Activated B cell treated with CpG ODN at 0.5 μM for 24 hours (primary cell): ENCODE measurements at regions of chr17 and their contacts with region 1.

Region 1: GRCh38 chr17:40399185-40399584 is 18.5 kb downstream of the TOP2A start:
- DNase-seq: no peak
- ATAC-seq: peak; percentile 61
- H3K4me3 Mint-ChIP-seq: no peak overlapping the region
- H3K27ac Mint-ChIP-seq: no peak overlapping the region
- H3K4me1 Mint-ChIP-seq: peaks cover 15% of the 10 kb centered on the region
- H3K27me3 Mint-ChIP-seq: no peaks in the 10 kb centered on the region
- CTCF ChIP-seq: no peak

Region 2: DNA sequence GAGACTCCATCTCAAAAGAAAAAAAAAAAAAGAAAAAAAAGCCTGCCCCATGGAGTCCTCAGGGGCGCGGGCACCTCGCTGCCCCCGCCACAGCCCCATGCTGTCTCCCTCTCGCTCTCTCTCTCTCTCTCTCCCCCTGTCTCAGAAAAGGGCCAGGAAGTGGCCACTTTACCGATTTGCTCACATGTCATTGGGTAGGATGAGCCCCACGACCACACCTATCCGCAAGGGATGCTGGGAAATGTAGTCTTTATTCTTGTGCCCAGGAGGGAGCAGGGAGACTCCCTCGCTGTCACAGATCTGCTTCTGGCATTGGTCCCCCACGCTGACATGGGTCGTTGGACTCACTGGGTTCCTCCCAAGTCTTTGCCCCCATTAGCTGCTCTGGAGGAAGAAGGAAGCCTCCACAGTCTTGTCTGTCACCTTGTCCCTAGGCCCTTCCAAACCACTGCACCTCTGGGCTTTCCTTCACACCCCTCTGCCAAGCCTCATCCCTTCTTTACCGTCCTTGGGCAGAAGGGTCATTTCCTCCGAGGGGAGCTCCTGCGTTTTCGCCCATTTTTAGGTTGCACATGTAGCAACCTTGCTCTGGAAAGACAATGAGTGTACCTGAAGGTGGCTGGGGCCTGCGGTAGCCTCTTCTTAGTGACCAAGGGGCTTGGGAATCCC is 27.8 kb before region 1 on chr17:
- CTCF ChIA-PET with region 1: no interaction called
- POLR2A ChIA-PET with region 1: no interaction called
- intact Hi-C with region 1: no loop called
- DNase-seq: no peak
- ATAC-seq: peak; percentile 82
- H3K4me3 Mint-ChIP-seq: no peak overlapping the region
- H3K27ac Mint-ChIP-seq: no peak overlapping the region
- H3K4me1 Mint-ChIP-seq: peaks cover 2% of the 10 kb centered on the region
- H3K27me3 Mint-ChIP-seq: no peaks in the 10 kb centered on the region
- CTCF ChIP-seq: no peak

Region 3: GRCh38 chr17:40551879-40552768 is 152.9 kb after region 1 on chr17:
- CTCF ChIA-PET with region 1: no interaction called
- POLR2A ChIA-PET with region 1: no interaction called
- intact Hi-C with region 1: loop called (anchors 5 kb)
- DNase-seq: peak; percentile 32
- ATAC-seq: peak; percentile 3
- H3K4me3 Mint-ChIP-seq: peak overlapping the region; percentile 36
- H3K27ac Mint-ChIP-seq: peak overlapping the region; percentile 99
- H3K4me1 Mint-ChIP-seq: peaks cover 100% of the 10 kb centered on the region
- H3K27me3 Mint-ChIP-seq: no peaks in the 10 kb centered on the region
- CTCF ChIP-seq: no peak

Region 4: GRCh38 chr17:40818733-40819527 is 419.7 kb after region 1 on chr17:
- CTCF ChIA-PET with region 1: no interaction called
- POLR2A ChIA-PET with region 1: interaction called, 10 read pairs
- intact Hi-C with region 1: no loop called
- DNase-seq: peak; percentile 79
- ATAC-seq: peak; percentile 89
- H3K4me3 Mint-ChIP-seq: peak overlapping the region; percentile 87
- H3K27ac Mint-ChIP-seq: peak overlapping the region; percentile 83
- H3K4me1 Mint-ChIP-seq: peaks cover 10% of the 10 kb centered on the region
- H3K27me3 Mint-ChIP-seq: peaks cover 14% of the 10 kb centered on the region
- CTCF ChIP-seq: no peak